Activated CD4-positive, alpha-beta T cell treated with anti-CD3 and anti-CD28 coated beads, Interleukin-2, amount 10 ng/mL, durations not matched to agents 7 days and 5 days (primary cell): ENCODE measurements at regions of chr1 and their contacts with region 1.

Region 1: GRCh38 chr1:27111626-27112573 is 43.0 kb downstream of the SLC9A1 start:
- DNase-seq: peak; percentile 77
- H3K4me3 Mint-ChIP-seq: no peak overlapping the region
- H3K27ac Mint-ChIP-seq: peak overlapping the region; percentile 80
- H3K4me1 Mint-ChIP-seq: peaks cover 59% of the 10 kb centered on the region
- H3K27me3 Mint-ChIP-seq: no peaks in the 10 kb centered on the region

Region 2: DNA sequence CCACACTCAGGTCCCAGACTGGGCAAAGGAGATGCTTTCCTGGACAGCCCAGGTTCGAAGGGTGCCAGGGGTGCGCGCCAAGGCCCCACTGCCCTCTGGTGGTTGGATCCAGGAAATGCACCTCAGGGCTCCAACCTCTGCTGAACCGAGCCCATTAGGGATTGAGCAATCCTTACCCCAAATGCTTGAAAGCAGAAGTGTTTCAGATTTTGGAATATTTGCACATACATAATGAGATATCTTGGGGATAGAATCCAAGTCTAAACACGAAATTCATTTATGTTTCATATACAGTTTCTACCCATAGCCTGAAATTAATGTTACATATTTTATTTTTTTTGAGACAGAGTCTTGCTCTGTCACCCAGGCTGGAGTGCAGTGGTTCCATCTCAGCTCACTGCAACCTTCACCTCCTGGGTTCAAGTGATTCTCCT is 14.4 kb before region 1 on chr1:
- CTCF ChIA-PET with region 1: interaction called, 11 read pairs
- POLR2A ChIA-PET with region 1: no interaction called
- DNase-seq: peak; percentile 79
- H3K4me3 Mint-ChIP-seq: no peak overlapping the region
- H3K27ac Mint-ChIP-seq: no peak overlapping the region
- H3K4me1 Mint-ChIP-seq: peaks cover 13% of the 10 kb centered on the region
- H3K27me3 Mint-ChIP-seq: no peaks in the 10 kb centered on the region

Region 3: GRCh38 chr1:27193194-27193593 is 81.3 kb after region 1 on chr1:
- CTCF ChIA-PET with region 1: no interaction called
- POLR2A ChIA-PET with region 1: no interaction called
- DNase-seq: no peak
- H3K4me3 Mint-ChIP-seq: no peak overlapping the region
- H3K27ac Mint-ChIP-seq: no peak overlapping the region
- H3K4me1 Mint-ChIP-seq: peaks cover 5% of the 10 kb centered on the region
- H3K27me3 Mint-ChIP-seq: peaks cover 3% of the 10 kb centered on the region

Region 4: DNA sequence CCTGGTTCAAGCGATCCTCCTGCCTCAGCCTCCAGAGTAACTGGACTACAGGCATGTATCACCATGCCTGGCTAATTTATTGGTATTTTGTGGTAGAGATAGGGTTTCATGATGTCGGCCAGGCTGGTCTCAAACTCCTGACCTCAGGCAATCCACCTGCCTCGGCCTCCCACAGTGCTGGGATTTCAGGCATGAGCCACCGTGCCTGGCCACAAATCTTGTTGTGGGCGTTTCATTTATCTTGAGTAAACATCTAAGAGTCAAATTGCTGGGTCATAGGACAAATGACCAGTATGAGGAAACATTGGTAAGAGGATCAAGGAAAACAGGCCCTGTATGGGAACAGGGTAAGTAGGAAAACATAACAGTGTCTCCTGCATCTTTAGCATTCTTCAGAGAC is 1993.9 kb after region 1 on chr1:
- CTCF ChIA-PET with region 1: interaction called, 10 read pairs
- POLR2A ChIA-PET with region 1: no interaction called
- DNase-seq: no peak
- H3K4me3 Mint-ChIP-seq: no peak overlapping the region
- H3K27ac Mint-ChIP-seq: no peak overlapping the region
- H3K4me1 Mint-ChIP-seq: no peaks in the 10 kb centered on the region
- H3K27me3 Mint-ChIP-seq: no peaks in the 10 kb centered on the region